ENCODE measurements at regions of chr17 and their contacts with region 1.

Region 1: GRCh38 chr17:21511363-21512198 is 135.4 kb downstream of the KCNJ12 start:
- DNase-seq: no peak
- H3K4me3 ChIP-seq: peak overlapping the region; percentile 56 to 67 (median 58)
- H3K27ac ChIP-seq: peak overlapping the region; percentile 43 to 63 (median 50)
- H3K4me1 ChIP-seq: peaks cover 9 to 19% (median 18%) of the 10 kb centered on the region in 4 donors
- H3K27me3 ChIP-seq: peaks cover 0 to 9% (median 0%) of the 10 kb centered on the region in 4 donors
- CTCF ChIP-seq: peak; percentile 44 to 84 (median 83)
- EP300 ChIP-seq: no peak
- POLR2A ChIP-seq: no peak

Region 2: DNA sequence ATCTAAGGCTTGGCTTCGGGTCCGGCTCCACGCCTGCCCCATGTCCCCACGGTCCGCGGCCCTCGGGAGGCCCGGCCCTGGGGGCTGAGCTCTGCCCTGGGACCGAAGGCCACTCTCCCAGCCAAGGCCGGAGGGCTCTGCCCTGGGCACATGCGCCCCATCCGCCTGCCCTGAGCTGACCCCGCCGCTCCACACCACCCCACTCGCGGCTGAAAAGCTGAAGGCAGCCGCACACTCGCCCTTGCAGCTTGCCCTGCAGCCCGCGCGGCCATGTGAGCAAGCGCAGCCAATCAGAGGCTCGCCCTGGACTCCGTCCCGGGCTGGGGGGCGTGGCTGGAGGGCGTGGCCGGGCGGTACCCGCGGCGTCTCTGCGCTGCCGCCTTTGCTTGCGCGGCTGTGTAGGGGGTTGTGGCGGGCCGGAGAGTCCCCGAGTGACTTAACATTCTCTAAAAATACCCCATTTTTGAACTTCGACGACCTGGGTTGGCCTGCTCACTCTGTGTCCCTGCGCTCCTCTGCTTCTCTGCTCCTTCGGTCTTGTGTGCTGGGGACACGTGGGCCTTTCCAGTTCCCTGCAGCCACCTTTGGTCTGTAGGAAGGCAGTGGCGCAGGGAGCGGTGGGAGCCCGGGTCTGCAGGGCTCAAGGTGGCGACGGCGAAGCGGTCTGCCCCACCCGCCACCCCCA is 235.9 kb before region 1 on chr17:
- intact Hi-C with region 1: loop called (anchors 2 kb)
- DNase-seq: peak; percentile 96
- H3K4me3 ChIP-seq: peak overlapping the region; percentile 65 to 77 (median 73)
- H3K27ac ChIP-seq: peak overlapping the region; percentile 62 to 76 (median 68)
- H3K4me1 ChIP-seq: peaks cover 11 to 45% (median 36%) of the 10 kb centered on the region in 4 donors
- H3K27me3 ChIP-seq: no peaks in the 10 kb centered on the region
- CTCF ChIP-seq: peak in 1 of 3 experiments; percentile 12
- EP300 ChIP-seq: no peak
- POLR2A ChIP-seq: no peak

Region 3: GRCh38 chr17:21318439-21318838 is 193.1 kb before region 1 on chr17:
- intact Hi-C with region 1: loop called (anchors 10 kb)
- DNase-seq: no peak
- H3K4me3 ChIP-seq: no peak overlapping the region
- H3K27ac ChIP-seq: no peak overlapping the region
- H3K4me1 ChIP-seq: peaks cover 3 to 12% (median 10%) of the 10 kb centered on the region in 4 donors
- H3K27me3 ChIP-seq: no peaks in the 10 kb centered on the region
- CTCF ChIP-seq: no peak
- EP300 ChIP-seq: no peak
- POLR2A ChIP-seq: no peak

Region 4: DNA sequence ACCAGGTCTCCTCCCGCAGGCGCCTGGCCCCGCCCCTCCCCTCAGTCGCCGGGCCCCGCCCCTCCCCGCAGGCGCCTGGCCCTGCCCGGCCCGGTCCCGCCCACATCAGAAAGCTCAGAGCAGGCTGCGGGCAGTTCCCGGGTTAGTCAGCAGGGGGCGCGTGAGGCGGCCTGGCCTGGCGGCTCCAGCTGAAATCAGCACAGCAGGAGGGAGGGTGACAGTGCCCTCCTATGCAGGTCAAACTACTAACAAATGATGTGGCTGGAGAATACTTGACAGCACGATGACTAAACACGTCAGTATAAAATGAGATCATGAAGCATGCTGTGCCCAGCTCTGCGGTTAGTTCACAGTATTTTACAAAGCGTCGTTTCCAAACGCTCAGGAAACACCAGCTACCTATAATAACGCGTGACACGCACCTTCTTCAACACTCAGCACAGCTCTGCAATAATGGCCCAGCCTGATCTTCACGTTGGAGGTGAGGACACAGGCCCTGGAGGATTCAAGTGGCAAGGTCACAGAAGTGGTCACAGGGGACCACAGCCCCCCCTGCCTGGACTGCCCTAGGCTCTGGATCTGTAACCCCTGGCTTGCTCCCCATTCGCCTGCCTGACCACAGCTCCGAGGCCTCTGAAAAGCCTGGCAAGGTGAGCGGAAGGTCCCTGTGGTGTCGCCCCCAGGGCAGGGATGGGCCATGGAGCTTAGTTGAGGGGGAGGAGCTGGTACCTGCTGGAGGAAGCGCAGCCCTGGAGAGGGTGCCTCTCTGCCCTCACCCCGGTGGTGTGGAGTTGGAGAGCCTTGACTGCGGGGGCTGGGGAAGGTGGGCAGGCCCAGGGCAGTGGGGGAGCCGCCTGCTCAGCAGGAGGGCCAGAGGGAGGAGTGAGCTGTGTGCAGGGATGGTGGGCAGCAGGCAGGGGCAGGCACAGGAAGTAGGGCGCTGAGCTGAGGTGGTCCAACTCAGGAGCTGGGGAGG is 54.2 kb before region 1 on chr17:
- intact Hi-C with region 1: loop called (anchors 2 kb)
- DNase-seq: peak; percentile 97
- H3K4me3 ChIP-seq: no peak overlapping the region
- H3K27ac ChIP-seq: peak overlapping the region in 3 of 4 donors; percentile 45 to 54 (median 46)
- H3K4me1 ChIP-seq: peaks cover 13 to 24% (median 20%) of the 10 kb centered on the region in 4 donors
- H3K27me3 ChIP-seq: peaks cover 0 to 17% (median 0%) of the 10 kb centered on the region in 4 donors
- CTCF ChIP-seq: peak; percentile 92 to 100 (median 96)
- EP300 ChIP-seq: no peak
- POLR2A ChIP-seq: no peak